Activated T-helper 2 cell treated with anti-CD3 and anti-CD28 coated beads, Interferon-gamma antibody, Interleukin-2, Interleukin-4, amounts not matched to agents 10 μg/mL and 5 μg/mL and 100 μg/mL, durations not matched to agents 14 hours and 24 hours and 36 hours (primary cell): ENCODE measurements at regions of chr5 and their contacts with region 1.

Region 1: DNA sequence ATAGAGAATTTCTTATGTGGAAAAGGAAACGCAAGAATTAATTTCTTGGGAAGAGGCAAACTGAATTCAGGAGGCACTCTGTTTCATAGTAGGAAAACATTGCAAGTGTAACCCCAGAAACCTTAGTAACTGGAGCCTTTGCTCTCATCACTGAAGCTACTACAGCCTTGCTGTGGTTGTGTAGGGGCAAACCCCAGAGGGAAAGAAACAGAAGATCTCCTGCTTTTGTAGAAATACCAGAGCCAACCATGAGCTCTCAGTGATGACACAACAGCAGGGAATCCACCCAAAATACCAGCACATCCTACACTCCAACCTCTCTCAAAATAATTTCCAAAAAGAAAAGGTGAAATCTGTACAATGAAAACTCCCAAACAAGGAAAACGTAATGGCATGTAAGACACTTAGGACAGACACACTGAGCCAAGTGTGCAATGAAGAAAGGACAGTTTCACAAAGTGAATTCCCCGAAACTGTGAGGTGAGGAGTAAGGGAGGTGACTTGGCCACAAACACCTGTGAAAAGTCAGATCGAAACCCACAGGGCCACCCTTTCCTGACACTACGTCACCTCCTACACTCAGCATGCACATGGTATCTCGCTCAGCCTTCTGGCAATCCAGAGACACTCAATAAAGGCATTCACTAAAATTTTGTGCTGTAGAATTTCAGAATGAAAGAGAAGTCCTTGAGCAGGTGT is 8.5 kb upstream of the ACSL6 start:
- DNase-seq: peak; percentile 82
- H3K4me3 Mint-ChIP-seq: peak overlapping the region; percentile 34
- H3K27ac Mint-ChIP-seq: peak overlapping the region; percentile 92
- H3K4me1 Mint-ChIP-seq: peaks cover 48% of the 10 kb centered on the region
- H3K27me3 Mint-ChIP-seq: peaks cover 24% of the 10 kb centered on the region

Region 2: DNA sequence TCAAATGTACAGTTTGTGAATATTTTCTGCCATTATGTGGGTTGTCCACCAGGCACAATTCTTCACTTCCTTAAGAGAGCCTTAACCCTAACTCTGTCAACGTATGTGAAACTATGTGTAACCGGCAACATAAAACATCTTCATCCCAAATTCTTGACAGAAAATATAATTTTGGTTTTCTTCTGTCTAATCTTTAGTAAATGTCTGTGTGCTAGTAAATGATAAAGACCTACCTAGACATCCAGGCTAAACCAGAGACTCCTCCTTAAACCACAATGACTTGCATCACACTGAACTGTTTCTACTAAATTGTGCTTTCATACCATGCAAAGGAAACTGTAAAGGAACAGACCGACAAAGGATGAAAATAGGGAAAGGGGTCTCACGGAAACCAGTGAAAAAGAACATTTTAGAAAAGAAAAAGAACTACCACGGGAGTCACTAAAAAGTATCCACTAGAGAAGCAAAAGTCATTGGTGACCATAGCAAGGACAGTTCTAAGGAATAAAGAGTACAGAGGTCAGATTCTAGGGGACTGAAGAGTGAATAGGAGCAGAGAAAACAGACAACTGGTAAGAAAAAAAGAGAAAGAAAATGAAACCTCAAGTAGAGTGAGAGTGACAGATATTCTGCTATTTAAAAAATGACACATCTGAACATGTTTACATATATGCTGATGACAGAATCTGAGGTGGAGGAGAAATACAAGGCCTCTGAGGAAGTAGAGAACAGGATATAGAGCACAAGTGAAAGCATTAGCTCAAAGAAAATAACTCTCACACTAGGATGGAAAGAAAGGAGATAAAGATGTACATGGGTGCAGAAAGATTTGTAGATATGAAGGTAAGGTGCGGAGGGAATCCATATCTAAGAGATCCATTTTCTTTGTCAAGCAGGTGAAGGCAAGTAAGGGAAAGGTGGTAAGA is 272.6 kb before region 1 on chr5:
- intact Hi-C with region 1: loop called (anchors 5 kb)
- DNase-seq: no peak
- H3K4me3 Mint-ChIP-seq: peak overlapping the region; percentile 61
- H3K27ac Mint-ChIP-seq: peak overlapping the region; percentile 88
- H3K4me1 Mint-ChIP-seq: peaks cover 40% of the 10 kb centered on the region
- H3K27me3 Mint-ChIP-seq: no peaks in the 10 kb centered on the region

Region 3: DNA sequence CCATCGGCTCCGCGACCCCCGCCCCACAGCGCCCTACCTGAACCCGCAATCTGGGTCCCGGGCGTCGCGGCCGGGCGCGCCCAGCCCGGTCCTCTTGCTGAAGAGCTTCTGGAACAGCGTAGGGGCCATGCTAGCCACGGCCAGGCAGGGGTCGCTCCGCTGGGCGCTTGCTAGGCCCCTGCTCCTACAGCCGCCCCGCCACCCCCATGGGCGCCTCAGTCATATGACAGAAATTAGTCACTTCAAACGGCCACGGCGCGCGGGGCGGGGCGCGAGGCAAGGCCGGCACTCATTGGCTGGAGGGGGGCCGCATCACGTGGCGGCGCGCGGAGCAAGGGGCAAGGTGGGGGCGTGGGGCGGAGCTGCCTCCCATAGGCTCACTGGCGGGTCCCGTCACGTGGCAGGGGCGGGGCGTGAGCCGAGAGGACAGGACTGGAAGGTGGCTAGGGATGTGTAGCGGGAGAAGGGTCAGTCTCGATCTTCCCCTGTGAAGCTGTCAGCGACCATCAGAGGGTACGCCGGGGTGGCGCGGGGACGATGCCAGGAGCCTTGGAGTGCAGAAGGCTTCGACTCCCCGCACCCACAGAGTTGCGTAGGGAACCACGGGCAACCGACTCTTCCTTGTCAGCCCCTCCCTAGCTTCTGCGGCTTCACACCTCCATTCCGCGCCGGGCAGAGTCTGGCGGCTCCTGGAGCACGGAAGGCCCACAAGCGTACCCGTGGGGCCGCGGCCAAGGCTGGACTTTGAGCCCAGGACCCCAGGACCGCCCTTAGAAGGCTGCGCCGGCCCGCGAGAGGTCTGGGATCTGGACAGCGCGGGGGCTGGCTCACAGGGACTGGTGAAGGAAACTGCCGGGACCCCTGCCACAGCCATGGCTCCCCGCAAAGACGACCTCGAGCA is 223.0 kb before region 1 on chr5 and contains the start of gene FNIP1:
- intact Hi-C with region 1: loop called (anchors 5 kb)
- DNase-seq: peak; percentile 99
- H3K4me3 Mint-ChIP-seq: peak within 1 kb of the TSS; percentile 97
- H3K27ac Mint-ChIP-seq: peak within 1 kb of the TSS; percentile 91
- H3K4me1 Mint-ChIP-seq: peaks cover 28% of the 10 kb centered on the region
- H3K27me3 Mint-ChIP-seq: peaks cover 8% of the 10 kb centered on the region
- total RNA-seq, gene FNIP1: 18.1 and 18.8 TPM in 2 replicates

Region 4: DNA sequence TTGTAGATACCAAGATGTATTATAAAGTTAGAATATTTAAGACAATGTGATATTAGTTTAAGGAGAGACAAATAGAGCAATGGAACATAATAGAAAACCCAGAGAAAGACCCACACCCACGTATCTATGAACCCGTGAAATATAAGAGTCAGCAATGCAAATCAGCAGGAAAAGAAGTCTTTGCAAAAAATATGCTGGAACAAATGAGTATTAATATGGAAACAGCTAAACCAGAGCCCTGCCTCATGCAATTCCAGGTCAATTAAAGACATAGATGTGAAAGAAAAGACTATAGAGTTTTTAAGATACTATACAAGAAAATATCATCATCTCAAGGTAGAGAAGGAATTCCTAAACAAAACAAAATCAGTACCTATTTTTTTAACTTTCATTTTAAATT is 17.3 kb after region 1 on chr5:
- intact Hi-C with region 1: loop called (anchors 2 kb)
- DNase-seq: no peak
- H3K4me3 Mint-ChIP-seq: no peak overlapping the region
- H3K27ac Mint-ChIP-seq: no peak overlapping the region
- H3K4me1 Mint-ChIP-seq: peaks cover 25% of the 10 kb centered on the region
- H3K27me3 Mint-ChIP-seq: peaks cover 36% of the 10 kb centered on the region

Region 5: GRCh38 chr5:132055808-132056609 is 36.0 kb after region 1 on chr5:
- intact Hi-C with region 1: loop called (anchors 1 kb)
- DNase-seq: peak; percentile 56
- H3K4me3 Mint-ChIP-seq: no peak overlapping the region
- H3K27ac Mint-ChIP-seq: peak overlapping the region; percentile 86
- H3K4me1 Mint-ChIP-seq: peaks cover 61% of the 10 kb centered on the region
- H3K27me3 Mint-ChIP-seq: peaks cover 2% of the 10 kb centered on the region